ENCODE measurements at regions of chrX and their contacts with region 1.

Region 1: DNA sequence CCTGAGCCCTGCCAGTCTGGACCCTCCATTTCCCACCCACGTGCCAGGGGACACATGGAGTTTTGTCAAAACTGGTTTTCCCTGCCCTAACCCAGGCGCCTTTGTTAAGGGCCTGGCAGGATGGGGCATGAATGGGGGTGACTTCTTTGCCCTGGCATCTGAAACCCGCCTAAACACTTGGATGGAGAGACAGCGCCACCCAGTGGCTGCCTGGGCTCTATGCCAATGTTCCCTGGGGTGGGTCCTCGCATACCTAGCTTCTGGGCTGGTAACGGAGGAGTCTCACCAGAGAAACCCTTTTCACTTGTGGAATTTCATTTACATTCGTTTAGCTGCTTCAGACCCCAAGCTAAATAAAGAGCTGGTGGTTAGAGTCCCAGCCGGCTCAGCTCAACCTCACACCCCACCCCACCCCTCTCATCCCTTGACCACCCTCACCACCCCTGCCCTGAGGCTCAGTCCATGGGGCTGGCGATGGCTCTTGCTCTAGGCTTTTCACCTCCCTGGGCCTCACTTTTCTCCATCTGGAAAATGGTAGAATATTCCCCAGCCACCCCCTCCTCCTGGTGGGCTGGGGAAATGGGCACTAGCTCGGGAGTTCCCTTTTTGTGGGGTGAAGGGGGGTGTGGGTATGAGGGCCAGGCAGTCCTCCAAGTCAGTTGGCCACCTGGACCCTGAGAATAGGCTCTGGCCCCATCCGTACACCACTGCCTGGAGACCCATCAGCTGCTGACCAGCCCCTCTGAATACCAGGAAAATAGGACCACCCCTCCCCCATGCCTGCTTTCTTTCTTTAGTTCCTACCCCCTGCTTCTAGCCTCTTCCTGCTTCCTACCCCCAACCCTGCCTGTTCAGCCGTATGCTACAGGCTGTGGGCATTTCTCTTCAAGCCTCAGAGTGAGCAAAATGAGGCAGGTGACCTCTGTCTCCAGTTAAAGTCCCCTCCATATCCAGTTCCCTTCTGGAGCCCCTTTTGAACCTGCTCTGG is 57.1 kb upstream of the PJA1 start:
- DNase-seq: peak; percentile 68
- ATAC-seq: peak; percentile 56
- H3K4me3 ChIP-seq: no peak overlapping the region
- H3K4me3 Mint-ChIP-seq: no peak overlapping the region
- H3K27ac ChIP-seq: no peak overlapping the region
- H3K27ac Mint-ChIP-seq: no peak overlapping the region
- H3K4me1 ChIP-seq: peaks cover 0 to 4% of the 10 kb centered on the region in 2 donors
- H3K4me1 Mint-ChIP-seq: no peaks in the 10 kb centered on the region
- H3K27me3 ChIP-seq: peaks cover 0 to 3% (median 0%) of the 10 kb centered on the region in 4 experiments
- H3K27me3 Mint-ChIP-seq: peaks cover 3% of the 10 kb centered on the region
- CTCF ChIP-seq: peak; percentile 66

Region 2: GRCh38 chrX:68822641-68823410 is 399.6 kb before region 1 on chrX:
- CTCF ChIA-PET with region 1: interaction called, 48 read pairs
- POLR2A ChIA-PET with region 1: no interaction called
- intact Hi-C with region 1: no loop called
- DNase-seq: no peak
- ATAC-seq: peak; percentile 47
- H3K4me3 ChIP-seq: no peak overlapping the region
- H3K4me3 Mint-ChIP-seq: no peak overlapping the region
- H3K27ac ChIP-seq: no peak overlapping the region
- H3K27ac Mint-ChIP-seq: no peak overlapping the region
- H3K4me1 ChIP-seq: peaks cover 0 to 3% of the 10 kb centered on the region in 2 donors
- H3K4me1 Mint-ChIP-seq: peaks cover 2% of the 10 kb centered on the region
- H3K27me3 ChIP-seq: no peaks in the 10 kb centered on the region
- H3K27me3 Mint-ChIP-seq: no peaks in the 10 kb centered on the region
- CTCF ChIP-seq: no peak

Region 3: DNA sequence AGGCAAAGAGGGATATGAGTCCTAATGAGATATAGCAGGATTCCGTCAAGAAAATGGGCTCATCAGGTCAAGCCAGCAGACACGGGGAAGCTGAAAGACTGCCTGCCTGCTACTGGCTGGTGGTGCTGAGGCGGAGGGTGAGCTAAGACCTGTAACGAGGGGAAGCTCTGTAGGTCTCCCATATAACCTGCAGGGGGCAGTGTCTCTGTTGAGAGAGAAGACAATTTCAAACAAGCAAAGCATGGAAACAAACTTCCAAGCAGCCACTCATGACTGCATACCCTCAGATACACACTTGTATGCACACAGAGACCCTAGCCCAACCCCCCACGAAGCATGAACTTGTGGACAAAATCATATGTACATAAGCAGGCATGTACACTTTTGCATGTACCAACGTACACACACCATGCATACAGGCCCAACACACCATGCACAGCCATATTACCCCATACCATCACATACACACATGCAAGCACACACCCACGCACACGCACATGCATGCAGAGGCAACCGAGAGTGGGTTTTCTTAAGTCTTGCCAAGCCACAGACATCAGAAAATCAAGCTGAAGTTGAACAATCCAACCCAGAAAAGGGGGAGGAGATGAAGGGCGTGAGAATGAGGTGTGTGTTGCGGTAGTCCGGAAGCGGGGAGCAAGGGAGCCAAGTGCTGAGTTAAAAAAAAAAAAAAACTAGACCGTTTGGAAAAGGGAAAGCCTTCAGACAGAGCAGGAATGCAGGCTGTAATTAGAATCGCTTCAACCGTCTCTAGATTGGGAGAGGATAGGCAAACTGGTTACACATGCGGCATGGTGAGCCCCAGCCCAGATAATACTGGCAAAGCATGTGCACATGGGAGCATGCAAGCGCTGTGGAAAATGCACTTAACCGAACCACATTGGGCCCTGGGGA is 128.2 kb before region 1 on chrX:
- CTCF ChIA-PET with region 1: interaction called, 3 read pairs
- POLR2A ChIA-PET with region 1: no interaction called
- intact Hi-C with region 1: loop called (anchors 5 kb)
- DNase-seq: peak; percentile 20
- ATAC-seq: no peak
- H3K4me3 ChIP-seq: no peak overlapping the region
- H3K4me3 Mint-ChIP-seq: no peak overlapping the region
- H3K27ac ChIP-seq: no peak overlapping the region
- H3K27ac Mint-ChIP-seq: no peak overlapping the region
- H3K4me1 ChIP-seq: no peaks in the 10 kb centered on the region
- H3K4me1 Mint-ChIP-seq: no peaks in the 10 kb centered on the region
- H3K27me3 ChIP-seq: no peaks in the 10 kb centered on the region
- H3K27me3 Mint-ChIP-seq: no peaks in the 10 kb centered on the region
- CTCF ChIP-seq: peak; percentile 36

Region 4: DNA sequence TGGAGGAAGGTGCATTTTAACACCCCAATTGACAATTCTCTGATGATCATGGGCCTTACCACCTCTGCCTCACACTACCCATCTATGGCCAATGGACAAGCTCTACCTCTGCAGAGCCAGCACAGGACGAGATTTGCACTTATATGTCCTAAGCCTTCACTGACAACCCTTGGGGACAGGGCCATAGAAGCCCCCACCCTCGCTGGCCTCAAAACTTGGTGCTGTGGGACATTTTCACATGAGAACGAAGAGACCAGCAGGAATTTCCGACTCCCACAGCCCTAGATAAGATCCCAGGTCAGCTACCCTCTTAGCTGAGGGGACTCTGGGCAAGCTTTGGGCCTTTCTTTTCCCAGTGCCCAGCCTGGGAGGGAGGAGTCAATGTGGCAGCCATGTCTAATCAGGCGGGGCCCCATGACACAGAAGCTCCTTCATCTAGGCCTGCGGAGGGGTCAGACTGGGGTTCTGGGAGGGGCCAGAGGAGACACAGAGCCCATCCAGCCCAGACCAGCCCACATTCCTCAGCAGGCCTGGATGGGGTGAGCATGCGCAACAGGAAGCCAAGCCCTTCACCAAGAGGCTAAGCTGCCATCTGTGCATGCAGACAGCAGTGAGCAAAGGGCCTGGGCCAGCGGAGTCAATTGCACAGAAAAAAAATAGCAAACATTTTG is 69.2 kb before region 1 on chrX:
- CTCF ChIA-PET with region 1: no interaction called
- POLR2A ChIA-PET with region 1: no interaction called
- intact Hi-C with region 1: no loop called
- DNase-seq: no peak
- ATAC-seq: no peak
- H3K4me3 ChIP-seq: no peak overlapping the region
- H3K4me3 Mint-ChIP-seq: no peak overlapping the region
- H3K27ac ChIP-seq: no peak overlapping the region
- H3K27ac Mint-ChIP-seq: no peak overlapping the region
- H3K4me1 ChIP-seq: no peaks in the 10 kb centered on the region
- H3K4me1 Mint-ChIP-seq: no peaks in the 10 kb centered on the region
- H3K27me3 ChIP-seq: no peaks in the 10 kb centered on the region
- H3K27me3 Mint-ChIP-seq: peaks cover 7% of the 10 kb centered on the region
- CTCF ChIP-seq: no peak

Region 5: DNA sequence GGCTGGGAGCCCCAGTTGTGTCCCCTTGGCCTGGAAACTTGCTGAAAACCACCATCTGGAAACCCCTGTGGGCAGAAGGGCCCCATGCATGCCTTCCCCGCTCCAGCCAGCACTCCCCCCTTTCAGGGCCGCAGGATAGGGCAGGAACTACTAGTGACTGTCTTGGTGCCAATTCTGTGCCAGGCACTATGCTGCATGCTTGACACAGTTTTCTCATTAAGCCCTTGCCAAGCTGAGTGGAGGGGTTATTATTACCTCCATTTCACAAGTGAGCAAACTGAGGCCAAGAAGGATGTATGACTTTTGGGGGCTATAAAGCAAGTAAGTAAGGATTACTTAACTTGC is 16.5 kb after region 1 on chrX:
- CTCF ChIA-PET with region 1: no interaction called
- POLR2A ChIA-PET with region 1: no interaction called
- intact Hi-C with region 1: no loop called
- DNase-seq: no peak
- ATAC-seq: no peak
- H3K4me3 ChIP-seq: no peak overlapping the region
- H3K4me3 Mint-ChIP-seq: no peak overlapping the region
- H3K27ac ChIP-seq: no peak overlapping the region
- H3K27ac Mint-ChIP-seq: no peak overlapping the region
- H3K4me1 ChIP-seq: no peaks in the 10 kb centered on the region
- H3K4me1 Mint-ChIP-seq: no peaks in the 10 kb centered on the region
- H3K27me3 ChIP-seq: no peaks in the 10 kb centered on the region
- H3K27me3 Mint-ChIP-seq: peaks cover 8% of the 10 kb centered on the region
- CTCF ChIP-seq: no peak

Measured in B cell (primary cell).